Transverse colon (tissue), 4 donors: ENCODE measurements at regions of chr3 and their contacts with region 1.

Region 1: DNA sequence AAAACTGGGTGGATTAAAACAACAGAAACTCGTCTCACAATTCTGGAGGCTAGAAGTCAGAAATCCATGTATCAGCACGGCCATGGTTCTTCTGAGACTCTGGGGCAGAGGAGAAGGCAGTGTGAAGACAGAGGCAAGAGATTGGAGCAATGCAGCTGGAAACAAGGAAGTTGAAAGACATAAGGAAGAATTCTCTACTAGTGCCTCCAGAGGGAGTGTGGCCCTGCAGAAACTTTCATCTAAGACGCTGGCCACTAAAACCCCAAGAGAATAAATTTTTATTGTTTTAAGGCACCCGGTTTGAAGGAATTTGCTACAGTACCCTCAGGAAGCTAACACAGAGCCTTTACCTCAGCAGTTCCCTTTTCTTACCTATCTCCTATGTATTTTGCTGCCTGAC is 1012.2 kb upstream of the CADM2 start:
- DNase-seq: no peak
- H3K4me3 ChIP-seq: no peak overlapping the region
- H3K27ac ChIP-seq: no peak overlapping the region
- H3K4me1 ChIP-seq: no peaks in the 10 kb centered on the region
- H3K27me3 ChIP-seq: no peaks in the 10 kb centered on the region
- CTCF ChIP-seq: no peak
- EP300 ChIP-seq: no peak
- POLR2A ChIP-seq: no peak

Region 2: GRCh38 chr3:84023842-84024241 is 77.3 kb after region 1 on chr3:
- in situ Hi-C with region 1: no loop called
- intact Hi-C with region 1: loop called (anchors 2 kb)
- DNase-seq: no peak
- H3K4me3 ChIP-seq: no peak overlapping the region
- H3K27ac ChIP-seq: no peak overlapping the region
- H3K4me1 ChIP-seq: no peaks in the 10 kb centered on the region
- H3K27me3 ChIP-seq: no peaks in the 10 kb centered on the region
- CTCF ChIP-seq: no peak
- EP300 ChIP-seq: no peak
- POLR2A ChIP-seq: no peak